GM10248 (cell line): ENCODE measurements at regions of chr3 and their contacts with region 1.

Region 1: GRCh38 chr3:14178247-14179113 is at the starts of genes LSM3 and XPC:
- DNase-seq: peak; percentile 94
- CTCF ChIP-seq: no peak

Region 2: DNA sequence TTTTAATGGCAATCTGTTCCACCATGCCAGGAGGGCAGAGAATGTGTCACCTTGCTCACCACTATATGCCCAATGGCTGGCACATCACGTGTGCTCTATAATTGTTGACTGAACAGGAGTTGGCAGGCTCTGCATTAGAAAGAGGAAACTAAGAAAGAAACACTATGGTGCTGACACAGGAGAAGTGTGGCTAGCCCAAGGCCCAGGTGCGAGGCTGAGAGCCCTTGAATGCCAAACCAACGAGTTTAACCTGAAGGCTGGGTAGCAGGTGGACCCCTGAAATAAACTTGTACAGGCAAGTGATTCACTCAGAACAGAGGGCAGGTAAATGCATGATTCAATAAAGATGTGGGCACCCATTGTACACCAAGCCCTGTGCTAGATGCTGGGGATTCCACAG is 56.2 kb before region 1 on chr3:
- CTCF ChIA-PET with region 1: interaction called, 3 read pairs
- POLR2A ChIA-PET with region 1: interaction called, 10 read pairs
- DNase-seq: no peak
- CTCF ChIP-seq: no peak

Region 3: GRCh38 chr3:14216257-14217048 is 38.0 kb after region 1 on chr3:
- CTCF ChIA-PET with region 1: no interaction called
- POLR2A ChIA-PET with region 1: no interaction called
- DNase-seq: no peak
- CTCF ChIP-seq: no peak

Region 4: GRCh38 chr3:14253022-14253706 is 74.7 kb after region 1 on chr3:
- CTCF ChIA-PET with region 1: no interaction called
- POLR2A ChIA-PET with region 1: no interaction called
- DNase-seq: no peak
- CTCF ChIP-seq: no peak